ENCODE measurements at regions of chr1 and their contacts with region 1.

Region 1: DNA sequence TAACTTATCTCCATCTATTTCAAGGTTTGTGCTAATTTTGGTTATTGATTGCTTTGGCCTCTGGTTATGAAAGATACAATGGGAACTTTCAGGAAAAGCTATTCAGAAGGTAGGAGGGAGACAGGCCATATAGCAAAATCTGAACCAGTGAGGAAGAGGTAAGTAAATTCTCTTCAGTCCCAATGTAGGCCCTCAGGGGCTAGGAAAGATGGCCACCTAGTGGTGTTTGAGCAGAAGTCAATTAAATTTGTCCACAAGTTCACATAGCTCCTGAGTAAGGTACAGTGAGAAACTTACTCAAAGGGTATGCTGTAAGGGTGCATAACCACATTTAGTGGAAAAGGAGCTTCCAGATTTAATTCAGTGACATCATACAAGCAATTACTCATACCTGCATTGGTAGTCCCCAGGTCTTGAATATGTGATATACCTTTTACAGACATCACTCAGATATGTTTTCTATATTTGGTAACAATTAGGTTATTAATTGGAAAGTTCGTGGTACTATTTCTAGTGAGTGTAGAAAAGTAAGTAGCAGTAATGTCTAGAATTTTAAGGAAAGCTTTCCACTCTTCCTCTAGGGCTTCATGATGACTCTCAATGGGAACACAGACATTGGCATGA is 21.4 kb upstream of the FMO1 start:
- DNase-seq: peak; percentile 11
- ATAC-seq: peak; percentile 95
- H3K4me3 ChIP-seq: no peak overlapping the region
- H3K27ac ChIP-seq: no peak overlapping the region
- H3K4me1 ChIP-seq: no peaks in the 10 kb centered on the region
- H3K27me3 ChIP-seq: no peaks in the 10 kb centered on the region
- CTCF ChIP-seq: peak; percentile 61 to 82 (median 73)
- EP300 ChIP-seq: no peak
- POLR2A ChIP-seq: no peak
- RAD21 ChIP-seq: peak; percentile 84

Region 2: GRCh38 chr1:170967042-170967910 is 259.6 kb before region 1 on chr1:
- CTCF ChIA-PET with region 1: interaction called, 59 read pairs
- POLR2A ChIA-PET with region 1: no interaction called
- RAD21 ChIA-PET with region 1: interaction called, 21 read pairs
- SMC1A ChIA-PET with region 1: interaction called, 23 read pairs
- in situ Hi-C with region 1: no loop called
- intact Hi-C with region 1: loop called (anchors 2 kb)
- DNase-seq: no peak
- ATAC-seq: peak; percentile 76
- H3K4me3 ChIP-seq: no peak overlapping the region
- H3K27ac ChIP-seq: no peak overlapping the region
- H3K4me1 ChIP-seq: no peaks in the 10 kb centered on the region
- H3K27me3 ChIP-seq: no peaks in the 10 kb centered on the region; a peak in 1 of 4 replicates
- CTCF ChIP-seq: peak; percentile 47 to 52 (median 49); a peak in 5 of 6 replicates
- EP300 ChIP-seq: no peak
- POLR2A ChIP-seq: no peak
- RAD21 ChIP-seq: peak; percentile 54

Region 3: GRCh38 chr1:171081314-171081753 is 145.5 kb before region 1 on chr1:
- CTCF ChIA-PET with region 1: interaction called, 47 read pairs
- POLR2A ChIA-PET with region 1: no interaction called
- RAD21 ChIA-PET with region 1: interaction called, 12 read pairs
- SMC1A ChIA-PET with region 1: interaction called, 8 read pairs
- in situ Hi-C with region 1: no loop called
- intact Hi-C with region 1: loop called (anchors 1 kb)
- DNase-seq: no peak
- ATAC-seq: peak; percentile 31; the same call in 1 of the 3 replicates
- H3K4me3 ChIP-seq: no peak overlapping the region
- H3K27ac ChIP-seq: no peak overlapping the region
- H3K4me1 ChIP-seq: no peaks in the 10 kb centered on the region
- H3K27me3 ChIP-seq: no peaks in the 10 kb centered on the region
- CTCF ChIP-seq: peak in 1 of 3 experiments; percentile 36; a peak in 2 of 6 replicates
- EP300 ChIP-seq: no peak
- POLR2A ChIP-seq: no peak
- RAD21 ChIP-seq: peak; percentile 30; the same call in 1 of the 2 replicates

Region 4: DNA sequence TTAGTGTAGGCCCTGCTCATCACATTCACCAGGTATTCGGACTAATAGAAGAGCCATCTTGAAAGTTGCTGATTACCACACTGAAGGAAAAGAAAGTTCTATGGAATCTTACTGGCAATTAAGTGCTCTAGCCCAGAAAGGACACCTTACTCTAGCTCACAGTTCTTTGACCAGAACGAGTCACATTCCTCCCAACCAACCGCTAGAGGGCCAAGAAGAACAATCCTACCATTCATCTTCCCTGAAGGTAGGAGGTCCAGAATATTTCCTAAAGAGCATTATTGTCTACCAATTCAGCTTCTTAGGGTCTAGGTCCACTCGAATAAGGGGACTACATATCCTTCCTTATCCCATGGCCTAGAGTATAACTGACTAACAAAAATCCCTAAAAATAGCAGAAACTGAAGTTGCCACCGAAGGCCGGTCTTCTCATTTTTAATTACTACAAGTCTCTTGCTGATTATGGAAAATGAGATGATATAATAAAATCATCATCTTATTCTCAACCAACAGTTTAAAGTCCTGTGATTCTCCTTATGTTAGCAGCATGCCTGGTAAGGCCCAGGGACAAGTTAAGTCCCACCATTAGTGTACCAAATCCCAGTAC is 18.7 kb after region 1 on chr1:
- CTCF ChIA-PET with region 1: interaction called, 10 read pairs
- POLR2A ChIA-PET with region 1: no interaction called
- RAD21 ChIA-PET with region 1: no interaction called
- SMC1A ChIA-PET with region 1: interaction called, 6 read pairs
- in situ Hi-C with region 1: no loop called
- intact Hi-C with region 1: no loop called
- DNase-seq: no peak
- ATAC-seq: peak; percentile 88
- H3K4me3 ChIP-seq: no peak overlapping the region
- H3K27ac ChIP-seq: no peak overlapping the region
- H3K4me1 ChIP-seq: no peaks in the 10 kb centered on the region
- H3K27me3 ChIP-seq: 0 out of 4 replicates have a peak, but pooled peaks cover 0 to 3% of the 10 kb centered on the region in 2 experiments
- CTCF ChIP-seq: peak; percentile 67 to 90 (median 83)
- EP300 ChIP-seq: no peak
- POLR2A ChIP-seq: no peak
- RAD21 ChIP-seq: peak; percentile 49